Activated CD4-positive, alpha-beta T cell treated with anti-CD3 and anti-CD28 coated beads for 36 hours (primary cell): ENCODE measurements at regions of chr13 and their contacts with region 1.

Region 1: GRCh38 chr13:32538621-32539246 is at the start of gene N4BP2L2:
- DNase-seq: peak; percentile 94
- ATAC-seq: peak; percentile 96
- H3K4me3 Mint-ChIP-seq: peak within 1 kb of the TSS; percentile 93
- H3K27ac Mint-ChIP-seq: peak within 1 kb of the TSS; percentile 98
- H3K4me1 Mint-ChIP-seq: peaks cover 39% of the 10 kb centered on the region
- H3K27me3 Mint-ChIP-seq: peaks cover 4% of the 10 kb centered on the region
- total RNA-seq, gene N4BP2L2: 95.1 to 105 TPM

Region 2: GRCh38 chr13:32031025-32031814 is 507.5 kb before region 1 on chr13 and contains the start of gene FRY:
- CTCF ChIA-PET with region 1: no interaction called
- POLR2A ChIA-PET with region 1: interaction called, 3 read pairs
- intact Hi-C with region 1: loop called in 1 of 2 experiments (anchors 10 kb)
- DNase-seq: peak; percentile 74
- ATAC-seq: peak; percentile 83
- H3K4me3 Mint-ChIP-seq: peak within 1 kb of the TSS; percentile 84
- H3K27ac Mint-ChIP-seq: peak within 1 kb of the TSS; percentile 62
- H3K4me1 Mint-ChIP-seq: peaks cover 29% of the 10 kb centered on the region
- H3K27me3 Mint-ChIP-seq: no peaks in the 10 kb centered on the region
- total RNA-seq, gene FRY: 1.9 to 3.5 TPM

Region 3: GRCh38 chr13:32211813-32212212 is 326.9 kb before region 1 on chr13:
- CTCF ChIA-PET with region 1: no interaction called
- POLR2A ChIA-PET with region 1: no interaction called
- intact Hi-C with region 1: no loop called
- DNase-seq: no peak
- ATAC-seq: no peak
- H3K4me3 Mint-ChIP-seq: no peak overlapping the region
- H3K27ac Mint-ChIP-seq: no peak overlapping the region
- H3K4me1 Mint-ChIP-seq: no peaks in the 10 kb centered on the region
- H3K27me3 Mint-ChIP-seq: no peaks in the 10 kb centered on the region

Region 4: GRCh38 chr13:32354040-32354439 is 184.7 kb before region 1 on chr13:
- CTCF ChIA-PET with region 1: no interaction called
- POLR2A ChIA-PET with region 1: no interaction called
- intact Hi-C with region 1: no loop called
- DNase-seq: no peak
- ATAC-seq: no peak
- H3K4me3 Mint-ChIP-seq: no peak overlapping the region
- H3K27ac Mint-ChIP-seq: no peak overlapping the region
- H3K4me1 Mint-ChIP-seq: no peaks in the 10 kb centered on the region
- H3K27me3 Mint-ChIP-seq: no peaks in the 10 kb centered on the region

Region 5: GRCh38 chr13:32427852-32428580 is 110.7 kb before region 1 on chr13 and contains the start of gene N4BP2L1:
- CTCF ChIA-PET with region 1: no interaction called
- POLR2A ChIA-PET with region 1: interaction called, 4 read pairs
- intact Hi-C with region 1: loop called (anchors 1 kb)
- DNase-seq: peak; percentile 94
- ATAC-seq: peak; percentile 77
- H3K4me3 Mint-ChIP-seq: peak within 1 kb of the TSS; percentile 86
- H3K27ac Mint-ChIP-seq: peak within 1 kb of the TSS; percentile 94
- H3K4me1 Mint-ChIP-seq: peaks cover 31% of the 10 kb centered on the region
- H3K27me3 Mint-ChIP-seq: no peaks in the 10 kb centered on the region
- total RNA-seq, gene N4BP2L1: 16.1 to 16.5 TPM

Region 6: GRCh38 chr13:32504263-32504927 is 34.3 kb before region 1 on chr13:
- CTCF ChIA-PET with region 1: interaction called, 3 read pairs
- POLR2A ChIA-PET with region 1: interaction called, 8 read pairs
- intact Hi-C with region 1: loop called in 1 of 2 experiments (anchors 5 kb)
- DNase-seq: no peak
- ATAC-seq: no peak
- H3K4me3 Mint-ChIP-seq: no peak overlapping the region
- H3K27ac Mint-ChIP-seq: no peak overlapping the region
- H3K4me1 Mint-ChIP-seq: peaks cover 3% of the 10 kb centered on the region
- H3K27me3 Mint-ChIP-seq: no peaks in the 10 kb centered on the region

Region 7: GRCh38 chr13:32650705-32651311 is 112.1 kb after region 1 on chr13:
- CTCF ChIA-PET with region 1: interaction called, 5 read pairs
- POLR2A ChIA-PET with region 1: no interaction called
- intact Hi-C with region 1: loop called in 1 of 2 experiments (anchors 5 kb)
- DNase-seq: peak; percentile 80
- ATAC-seq: peak; percentile 90
- H3K4me3 Mint-ChIP-seq: no peak overlapping the region
- H3K27ac Mint-ChIP-seq: peak overlapping the region; percentile 72
- H3K4me1 Mint-ChIP-seq: peaks cover 47% of the 10 kb centered on the region
- H3K27me3 Mint-ChIP-seq: no peaks in the 10 kb centered on the region

Region 8: DNA sequence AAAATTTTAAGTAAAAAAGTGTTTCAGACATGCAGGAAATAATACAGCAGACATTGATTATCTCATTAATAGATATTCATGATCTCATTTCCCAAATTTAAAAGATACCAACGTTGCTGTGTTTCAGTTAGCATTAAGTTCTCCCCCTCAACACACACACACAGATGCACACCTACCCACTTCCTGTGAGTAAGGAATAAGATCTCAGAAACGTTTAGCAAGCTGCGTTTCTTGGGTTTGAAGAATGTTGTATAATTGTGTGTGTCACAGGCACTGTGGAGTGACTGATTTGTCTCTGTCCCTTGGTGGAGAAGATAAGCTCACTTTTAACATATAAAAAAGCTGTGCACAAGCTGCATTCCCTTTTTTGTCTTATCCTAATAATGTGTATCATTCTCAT is 244.3 kb after region 1 on chr13:
- CTCF ChIA-PET with region 1: no interaction called
- POLR2A ChIA-PET with region 1: no interaction called
- intact Hi-C with region 1: loop called in 1 of 2 experiments (anchors 5 kb)
- DNase-seq: peak; percentile 36
- ATAC-seq: peak; percentile 97
- H3K4me3 Mint-ChIP-seq: no peak overlapping the region
- H3K27ac Mint-ChIP-seq: no peak overlapping the region
- H3K4me1 Mint-ChIP-seq: peaks cover 17% of the 10 kb centered on the region
- H3K27me3 Mint-ChIP-seq: no peaks in the 10 kb centered on the region